ENCODE measurements at regions of chr17 and their contacts with region 1.

Region 1: GRCh38 chr17:35808962-35809854 is at the start of gene TAF15:
- DNase-seq: peak; percentile 88

Region 2: DNA sequence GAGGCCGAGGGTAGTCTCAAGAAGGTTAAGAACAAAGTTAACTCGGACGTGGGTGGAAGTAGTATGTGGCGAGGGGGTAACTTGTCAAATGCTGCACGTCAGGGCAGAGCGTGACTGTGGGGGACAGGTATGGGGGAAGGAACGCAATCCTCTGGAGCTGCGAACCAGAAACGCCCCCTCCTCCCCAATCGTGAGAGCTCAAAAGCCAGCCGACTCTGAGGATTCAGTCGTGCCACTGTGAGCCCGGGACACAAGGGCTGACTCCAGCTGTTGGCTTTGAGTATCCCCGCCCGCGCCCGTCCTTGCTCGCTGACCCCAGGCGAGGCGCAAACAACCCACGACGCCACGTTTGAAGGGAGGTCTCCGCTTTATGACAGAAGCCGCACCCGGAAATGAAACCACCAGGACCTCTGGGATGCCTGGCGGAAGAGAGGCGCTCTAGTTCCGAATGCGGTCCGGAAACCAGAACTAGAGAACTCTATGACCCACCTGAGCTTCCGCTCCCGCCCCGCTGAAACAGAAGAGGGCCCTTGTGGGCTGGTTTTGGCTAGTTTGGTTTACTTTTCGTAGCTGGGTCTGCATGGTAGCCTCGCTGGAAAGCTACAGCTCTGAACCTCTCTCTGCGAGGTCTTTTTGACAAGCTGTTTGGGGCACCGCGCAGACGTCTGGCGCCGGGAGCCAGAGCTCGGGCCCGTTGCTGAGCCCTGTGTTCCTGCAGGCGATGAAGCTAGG is 230.8 kb before region 1 on chr17 and contains the start of gene PEX12:
- CTCF ChIA-PET with region 1: no interaction called
- POLR2A ChIA-PET with region 1: interaction called, 29 read pairs
- DNase-seq: peak; percentile 65

Region 3: GRCh38 chr17:35757243-35757642 is 52.0 kb before region 1 on chr17:
- CTCF ChIA-PET with region 1: no interaction called
- POLR2A ChIA-PET with region 1: interaction called, 23 read pairs
- DNase-seq: no peak

Region 4: DNA sequence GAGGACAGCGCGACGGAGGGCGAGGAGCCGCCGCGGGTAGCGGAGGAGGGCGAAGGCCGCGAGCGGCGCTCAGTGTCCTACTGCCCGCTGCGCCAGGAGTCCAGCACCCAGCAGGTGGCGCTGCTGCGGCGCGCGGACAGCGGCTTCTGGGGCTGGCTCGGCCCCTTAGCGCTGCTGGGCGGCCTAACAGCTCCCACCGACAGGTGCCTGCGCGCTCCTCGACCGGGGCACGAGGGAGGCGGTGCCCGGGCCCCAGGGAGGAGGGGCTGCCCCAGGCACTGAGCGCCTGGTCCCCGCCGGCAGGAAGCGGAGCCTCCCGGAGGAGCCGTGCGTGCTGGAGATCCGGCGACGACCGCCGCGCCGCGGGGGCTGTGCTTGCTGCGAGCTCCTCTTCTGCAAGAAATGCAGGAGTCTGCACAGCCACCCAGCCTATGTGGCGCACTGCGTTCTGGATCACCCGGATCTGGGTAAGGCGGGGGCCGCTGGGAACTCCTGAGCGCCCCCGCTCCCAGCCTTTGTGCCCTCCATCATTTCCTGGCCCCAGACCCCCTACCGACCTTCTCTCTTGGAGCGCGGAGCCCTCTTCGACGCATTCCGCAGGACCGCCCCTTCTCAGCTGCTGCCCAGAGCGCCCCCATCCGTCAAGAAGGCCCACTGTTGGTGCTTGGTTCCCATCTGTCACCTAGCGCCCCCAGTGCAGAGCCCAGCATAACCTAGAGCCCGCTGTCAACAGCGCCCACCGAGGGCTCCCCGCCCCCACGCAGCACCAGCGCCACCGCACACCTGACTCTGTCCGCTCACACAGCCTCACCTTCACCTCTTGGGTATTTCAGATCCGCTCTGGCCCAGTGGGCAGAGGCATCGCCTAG is 44.9 kb before region 1 on chr17:
- CTCF ChIA-PET with region 1: interaction called, 54 read pairs
- POLR2A ChIA-PET with region 1: interaction called, 104 read pairs
- DNase-seq: peak; percentile 88

Region 5: DNA sequence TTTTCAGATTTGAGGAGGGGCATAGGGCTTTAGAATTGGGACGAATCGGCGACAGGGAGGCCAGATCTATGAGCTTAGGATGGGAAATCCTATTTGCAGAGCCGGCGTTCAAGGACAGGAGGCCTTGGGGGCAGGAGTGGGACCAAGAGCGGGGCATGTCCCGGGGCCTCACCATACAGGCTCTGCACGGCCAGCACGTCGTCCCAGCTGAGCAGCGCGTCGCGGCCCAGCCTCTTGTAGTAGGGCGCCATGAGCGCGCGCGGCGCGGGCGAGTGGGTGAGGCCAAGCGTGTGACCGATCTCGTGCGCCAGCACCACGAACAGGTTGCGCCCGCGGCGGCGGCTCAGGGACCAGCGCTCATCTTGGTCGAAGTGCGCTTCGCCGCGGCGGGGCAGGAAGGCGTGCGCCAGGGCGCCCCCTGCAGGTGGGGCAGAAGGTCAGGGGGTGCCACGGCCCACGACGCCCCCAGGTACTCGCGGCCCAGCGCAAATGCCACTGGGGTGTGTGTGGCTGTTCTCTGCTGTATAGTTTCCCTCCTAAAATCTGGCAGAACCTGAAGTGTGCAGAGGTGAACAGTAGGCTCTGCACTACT is 39.2 kb before region 1 on chr17:
- CTCF ChIA-PET with region 1: interaction called, 54 read pairs
- POLR2A ChIA-PET with region 1: interaction called, 104 read pairs
- DNase-seq: no peak

Region 6: DNA sequence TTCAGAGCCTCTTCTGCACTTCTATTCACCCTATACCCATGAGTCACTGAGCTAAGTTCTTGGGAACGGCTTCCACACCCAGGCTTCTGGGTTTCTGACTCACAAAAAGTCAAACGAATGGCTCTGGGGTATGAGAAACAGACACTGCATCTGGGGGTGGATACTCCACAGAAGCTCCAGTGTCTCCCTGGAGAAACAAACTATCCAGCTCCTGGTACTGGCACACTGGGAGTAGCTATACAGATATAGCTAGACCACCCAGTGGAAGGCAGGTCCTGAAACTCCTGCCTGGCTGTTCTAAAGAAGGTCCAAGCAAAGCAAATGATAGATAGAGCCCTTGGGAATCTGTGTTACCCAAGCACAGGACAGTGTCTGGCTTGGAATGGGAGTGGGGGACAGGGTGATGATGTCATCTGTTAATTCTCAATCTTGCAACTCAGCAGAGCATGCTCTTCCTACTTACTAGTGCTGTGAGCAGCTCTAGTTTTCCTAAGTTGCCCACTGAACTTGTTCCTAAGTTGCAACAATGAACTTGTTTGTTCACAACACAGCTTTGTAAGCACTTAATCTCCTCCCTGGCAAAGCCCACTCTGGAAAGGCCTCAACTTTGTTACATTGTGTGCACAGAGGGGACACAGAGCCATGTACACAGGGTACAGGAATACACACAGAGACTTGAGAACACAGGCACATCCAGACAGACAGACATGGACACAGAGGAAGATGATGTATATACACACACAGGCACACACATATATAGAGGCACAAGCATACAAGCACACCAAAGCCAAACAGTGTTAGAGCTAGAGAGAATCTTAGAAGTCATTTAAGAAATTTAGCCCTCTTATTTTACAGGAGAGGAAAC is 20.5 kb before region 1 on chr17:
- CTCF ChIA-PET with region 1: interaction called, 3 read pairs
- POLR2A ChIA-PET with region 1: interaction called, 109 read pairs
- DNase-seq: no peak

Region 7: DNA sequence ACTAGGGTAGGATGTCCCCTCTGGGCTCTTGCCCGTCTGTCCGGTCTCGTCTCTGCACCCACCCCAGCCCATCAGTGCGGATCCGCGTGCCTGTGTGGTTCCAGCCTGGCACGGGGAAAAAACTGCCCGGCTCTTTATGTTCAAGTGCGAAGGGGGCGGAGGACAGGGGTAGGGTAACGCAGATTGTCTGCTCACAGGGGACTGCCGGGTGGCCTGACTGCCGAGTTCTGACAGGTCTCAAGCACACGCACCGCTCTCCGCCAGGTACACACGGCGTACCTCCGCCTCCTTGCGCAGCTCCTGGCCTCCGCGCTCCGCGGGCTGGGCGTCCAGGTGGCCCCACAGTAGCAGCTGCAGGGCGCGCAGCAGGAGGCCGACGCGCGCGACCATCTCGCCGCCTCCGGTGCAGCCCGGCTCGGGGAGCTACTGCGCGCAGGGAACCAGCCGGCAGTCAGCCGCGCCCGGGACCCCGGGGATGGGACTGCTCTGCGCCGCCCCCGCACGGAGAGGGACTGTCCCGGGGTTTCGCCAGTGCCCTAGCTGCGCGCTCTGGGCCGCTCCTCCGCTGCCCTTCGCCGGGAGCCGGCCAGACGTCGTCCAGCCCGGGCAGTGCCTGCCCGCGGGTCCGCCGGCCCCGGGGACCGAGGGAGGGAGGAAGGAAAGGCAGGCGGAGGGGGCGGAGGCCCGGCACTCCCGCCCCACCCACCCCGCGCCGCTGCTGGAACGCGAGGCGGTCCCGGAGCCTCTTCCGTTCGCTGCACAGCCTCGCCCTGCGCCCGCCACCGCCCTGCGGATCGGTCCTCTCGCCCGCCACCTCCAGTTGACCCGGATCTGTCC is 14.0 kb before region 1 on chr17 and contains the start of gene MMP28:
- CTCF ChIA-PET with region 1: interaction called, 4 read pairs
- POLR2A ChIA-PET with region 1: interaction called, 109 read pairs
- DNase-seq: peak; percentile 33

Region 8: DNA sequence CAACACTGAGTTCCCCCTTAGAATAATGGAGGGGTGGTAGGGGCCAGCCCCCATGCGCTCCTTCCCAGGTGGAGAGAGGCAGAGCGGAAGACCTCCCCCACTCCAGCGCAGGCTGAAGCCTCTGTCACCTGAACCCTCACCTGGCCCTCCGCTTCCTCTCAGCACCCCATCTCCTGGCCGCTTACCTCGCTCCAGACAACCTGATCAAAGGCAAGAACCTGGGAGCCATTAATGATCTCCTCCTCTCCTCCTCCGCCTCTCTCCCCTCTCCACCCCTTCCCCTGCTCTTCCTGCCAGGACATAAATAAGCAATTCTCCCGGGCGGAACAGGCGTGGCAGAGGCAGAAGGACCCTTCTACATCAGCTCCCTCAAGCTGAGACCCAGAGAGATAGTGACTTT is 1017.9 kb after region 1 on chr17:
- CTCF ChIA-PET with region 1: no interaction called
- POLR2A ChIA-PET with region 1: no interaction called
- DNase-seq: no peak